Panc1 (cell line): ENCODE measurements at regions of chr14 and their contacts with region 1.

Region 1: GRCh38 chr14:46250113-46250703 is 401.4 kb downstream of the RPL10L start:
- DNase-seq: no peak
- ATAC-seq: no peak
- H3K4me3 ChIP-seq: no peak overlapping the region
- H3K27ac ChIP-seq: no peak overlapping the region
- H3K4me1 ChIP-seq: no peaks in the 10 kb centered on the region
- H3K27me3 ChIP-seq: no peaks in the 10 kb centered on the region
- CTCF ChIP-seq: peak; percentile 59; the same call in 1 of the 2 replicates

Region 2: GRCh38 chr14:46134144-46134543 is 116.1 kb before region 1 on chr14:
- CTCF ChIA-PET with region 1: no interaction called
- POLR2A ChIA-PET with region 1: no interaction called
- in situ Hi-C with region 1: no loop called
- intact Hi-C with region 1: no loop called
- DNase-seq: no peak
- ATAC-seq: no peak
- H3K4me3 ChIP-seq: no peak overlapping the region
- H3K27ac ChIP-seq: no peak overlapping the region
- H3K4me1 ChIP-seq: no peaks in the 10 kb centered on the region
- H3K27me3 ChIP-seq: no peaks in the 10 kb centered on the region
- CTCF ChIP-seq: no peak

Region 3: DNA sequence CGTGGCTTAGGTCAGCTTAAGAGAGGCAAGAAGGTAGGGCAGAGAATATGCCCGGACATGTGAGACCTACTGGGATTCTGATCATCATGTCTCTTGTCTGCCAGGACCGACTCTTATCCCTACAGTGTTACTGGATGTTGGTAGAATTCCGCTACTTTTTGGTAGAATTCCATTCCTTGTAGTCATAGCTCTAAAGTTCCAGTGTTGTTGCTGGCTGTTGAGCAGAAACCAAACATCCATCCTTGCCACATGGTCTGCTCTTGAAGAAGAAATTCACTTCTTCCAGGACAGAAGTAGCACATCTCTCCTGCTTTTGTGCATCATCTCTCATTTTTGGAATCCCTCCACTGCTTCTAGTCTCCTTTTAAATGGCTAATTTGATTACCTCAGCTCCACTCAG is 52.4 kb before region 1 on chr14:
- CTCF ChIA-PET with region 1: no interaction called
- POLR2A ChIA-PET with region 1: no interaction called
- in situ Hi-C with region 1: no loop called
- intact Hi-C with region 1: no loop called
- DNase-seq: no peak
- ATAC-seq: no peak
- H3K4me3 ChIP-seq: no peak overlapping the region
- H3K27ac ChIP-seq: no peak overlapping the region
- H3K4me1 ChIP-seq: no peaks in the 10 kb centered on the region
- H3K27me3 ChIP-seq: no peaks in the 10 kb centered on the region
- CTCF ChIP-seq: no peak

Region 4: GRCh38 chr14:46344327-46344937 is 94.2 kb after region 1 on chr14:
- CTCF ChIA-PET with region 1: no interaction called
- POLR2A ChIA-PET with region 1: no interaction called
- in situ Hi-C with region 1: no loop called
- intact Hi-C with region 1: loop called (anchors 5 kb)
- DNase-seq: peak; percentile 13
- ATAC-seq: no peak
- H3K4me3 ChIP-seq: no peak overlapping the region
- H3K27ac ChIP-seq: no peak overlapping the region
- H3K4me1 ChIP-seq: no peaks in the 10 kb centered on the region
- H3K27me3 ChIP-seq: no peaks in the 10 kb centered on the region
- CTCF ChIP-seq: peak; percentile 55